Activated naive CD4-positive, alpha-beta T cell treated with anti-CD3 and anti-CD28 coated beads for 36 hours (primary cell): ENCODE measurements at regions of chr12 and their contacts with region 1.

Region 1: GRCh38 chr12:94149119-94149780 is 873 bp downstream of the PLXNC1 start:
- DNase-seq: peak; percentile 42
- H3K4me3 Mint-ChIP-seq: peak overlapping the region; percentile 80
- H3K27ac Mint-ChIP-seq: no peak overlapping the region
- H3K4me1 Mint-ChIP-seq: peaks cover 23% of the 10 kb centered on the region
- H3K27me3 Mint-ChIP-seq: peaks cover 9% of the 10 kb centered on the region

Region 2: GRCh38 chr12:94101738-94102660 is 47.3 kb before region 1 on chr12:
- CTCF ChIA-PET with region 1: no interaction called
- intact Hi-C with region 1: no loop called
- DNase-seq: peak; percentile 93
- H3K4me3 Mint-ChIP-seq: peak overlapping the region; percentile 78
- H3K27ac Mint-ChIP-seq: peak overlapping the region; percentile 7
- H3K4me1 Mint-ChIP-seq: peaks cover 16% of the 10 kb centered on the region
- H3K27me3 Mint-ChIP-seq: no peaks in the 10 kb centered on the region

Region 3: GRCh38 chr12:94262228-94263010 is 113.2 kb after region 1 on chr12:
- CTCF ChIA-PET with region 1: interaction called, 3 read pairs
- intact Hi-C with region 1: loop called (anchors 1 kb)
- DNase-seq: peak; percentile 83
- H3K4me3 Mint-ChIP-seq: peak overlapping the region; percentile 89
- H3K27ac Mint-ChIP-seq: peak overlapping the region; percentile 96
- H3K4me1 Mint-ChIP-seq: peaks cover 31% of the 10 kb centered on the region
- H3K27me3 Mint-ChIP-seq: no peaks in the 10 kb centered on the region

Region 4: GRCh38 chr12:94326727-94327126 is 177.5 kb after region 1 on chr12:
- CTCF ChIA-PET with region 1: no interaction called
- intact Hi-C with region 1: loop called (anchors 2 kb)
- DNase-seq: no peak
- H3K4me3 Mint-ChIP-seq: no peak overlapping the region
- H3K27ac Mint-ChIP-seq: no peak overlapping the region
- H3K4me1 Mint-ChIP-seq: peaks cover 9% of the 10 kb centered on the region
- H3K27me3 Mint-ChIP-seq: no peaks in the 10 kb centered on the region

Region 5: DNA sequence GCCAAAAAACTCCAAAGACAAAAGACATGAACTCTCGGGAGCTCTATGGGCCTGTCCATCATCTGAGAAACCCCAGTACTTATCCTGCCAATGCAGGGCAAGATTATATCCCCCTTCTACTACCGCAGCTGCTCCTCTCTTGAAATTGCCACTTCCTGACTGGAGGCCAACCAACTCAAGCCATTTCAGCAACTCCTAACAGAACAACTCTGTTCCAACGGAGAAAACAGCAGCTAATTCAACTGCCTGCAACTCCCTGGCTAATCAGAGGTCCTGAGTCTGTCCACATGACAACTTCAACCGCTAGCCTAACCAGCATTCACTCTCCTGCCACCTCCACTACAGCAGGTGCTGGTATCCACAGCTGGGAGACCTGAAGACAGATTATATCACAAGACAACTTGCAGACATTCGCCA is 286.3 kb after region 1 on chr12:
- CTCF ChIA-PET with region 1: no interaction called
- intact Hi-C with region 1: loop called (anchors 1 kb)
- DNase-seq: no peak
- H3K4me3 Mint-ChIP-seq: no peak overlapping the region
- H3K27ac Mint-ChIP-seq: no peak overlapping the region
- H3K4me1 Mint-ChIP-seq: peaks cover 34% of the 10 kb centered on the region
- H3K27me3 Mint-ChIP-seq: no peaks in the 10 kb centered on the region

Region 6: DNA sequence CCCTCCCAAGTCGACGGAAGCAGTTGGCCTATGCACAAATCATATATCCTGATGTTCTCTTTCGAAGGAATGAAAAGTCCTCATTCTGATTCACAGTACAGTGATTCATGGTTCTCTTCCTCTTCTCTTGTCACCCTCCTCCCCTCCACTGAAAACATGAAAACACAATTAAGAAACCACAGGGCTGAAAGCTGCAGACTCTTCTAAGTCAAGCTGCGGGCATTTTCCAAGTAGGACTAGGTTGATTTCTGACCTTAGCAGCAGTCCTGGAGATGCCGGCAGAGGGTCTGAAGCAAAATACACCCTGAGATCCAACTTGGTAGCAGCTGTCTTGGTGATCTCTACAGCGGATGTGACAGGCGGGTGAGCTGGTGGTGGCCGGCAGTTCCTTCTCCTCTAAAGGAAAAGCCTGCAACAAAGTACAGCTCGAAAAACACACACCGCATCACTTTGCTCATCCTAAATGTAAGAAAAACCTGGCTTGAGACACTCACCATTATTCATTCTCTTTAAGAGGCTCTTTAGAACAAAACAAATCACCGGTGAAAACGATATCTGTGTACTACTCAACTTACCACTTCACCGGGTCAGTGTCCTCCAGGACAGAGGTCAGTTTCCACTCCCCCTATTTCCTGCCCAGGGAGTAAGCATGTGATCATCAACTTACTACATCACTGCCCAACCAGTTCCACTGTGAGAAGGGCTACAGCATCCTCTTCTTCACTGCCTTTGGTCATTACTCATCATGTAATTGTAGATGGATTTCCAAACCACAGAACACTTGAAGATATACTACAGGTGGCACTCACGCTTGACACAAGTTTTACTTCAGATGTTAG is 495.1 kb after region 1 on chr12:
- CTCF ChIA-PET with region 1: no interaction called
- intact Hi-C with region 1: loop called (anchors 2 kb)
- DNase-seq: peak; percentile 18
- H3K4me3 Mint-ChIP-seq: peak overlapping the region; percentile 8
- H3K27ac Mint-ChIP-seq: no peak overlapping the region
- H3K4me1 Mint-ChIP-seq: peaks cover 27% of the 10 kb centered on the region
- H3K27me3 Mint-ChIP-seq: peaks cover 50% of the 10 kb centered on the region

Region 7: DNA sequence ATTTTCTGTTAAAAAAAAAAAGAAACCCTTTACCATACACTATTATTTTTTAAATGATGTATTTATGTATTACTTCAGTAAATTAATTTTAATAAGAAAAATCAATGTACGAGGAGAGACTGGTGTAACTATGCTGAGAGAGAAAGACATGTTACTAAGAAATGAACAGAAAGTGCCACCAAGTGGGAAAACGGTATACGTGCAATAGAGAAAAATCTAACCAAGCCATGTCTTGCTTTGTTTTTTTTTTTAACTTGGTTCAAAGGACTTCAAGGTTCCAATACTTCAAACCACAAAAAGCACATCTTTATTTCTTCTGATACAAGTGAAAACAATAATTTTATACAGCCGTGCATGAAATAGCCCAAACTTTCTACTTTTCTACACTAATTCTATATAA is 831.3 kb after region 1 on chr12:
- CTCF ChIA-PET with region 1: no interaction called
- intact Hi-C with region 1: loop called (anchors 10 kb)
- DNase-seq: no peak
- H3K4me3 Mint-ChIP-seq: no peak overlapping the region
- H3K27ac Mint-ChIP-seq: no peak overlapping the region
- H3K4me1 Mint-ChIP-seq: peaks cover 47% of the 10 kb centered on the region
- H3K27me3 Mint-ChIP-seq: no peaks in the 10 kb centered on the region